K562 (cell line): ENCODE measurements at regions of chr14 and their contacts with region 1.

Region 1: GRCh38 chr14:61694830-61695694 is at the start of gene HIF1A:
- DNase-seq: peak; percentile 95 to 96 (median 96)
- ATAC-seq: peak; percentile 89
- H3K4me3 ChIP-seq: peak within 1 kb of the TSS; percentile 84
- H3K27ac ChIP-seq: peak within 1 kb of the TSS; percentile 88
- H3K4me1 ChIP-seq: peaks cover 0 to 12% of the 10 kb centered on the region in 2 experiments; a peak in 3 of 5 replicates
- H3K27me3 ChIP-seq: no peaks in the 10 kb centered on the region
- CTCF ChIP-seq: no peak; a peak in 1 of 6 replicates
- EP300 ChIP-seq: no peak
- POLR2A ChIP-seq: peak; percentile 89
- RAD21 ChIP-seq: 0 out of 4 replicates have a peak, but pooled peaks of 1 of the 2 experiments have one; percentile 14
- polyA plus RNA-seq, gene HIF1A: 5.9 to 7.5 TPM

Region 2: GRCh38 chr14:61561657-61562276 is 133.3 kb before region 1 on chr14:
- CTCF ChIA-PET with region 1: no interaction called
- POLR2A ChIA-PET with region 1: no interaction called
- in situ Hi-C with region 1: no loop called
- intact Hi-C with region 1: loop called (anchors 5 kb)
- DNase-seq: peak in 1 of 4 experiments; percentile 11
- ATAC-seq: no peak
- H3K4me3 ChIP-seq: no peak overlapping the region
- H3K27ac ChIP-seq: peak overlapping the region; percentile 81; the same call in 2 of the 3 replicates
- H3K4me1 ChIP-seq: peaks cover 29 to 54% of the 10 kb centered on the region in 2 experiments
- H3K27me3 ChIP-seq: no peaks in the 10 kb centered on the region
- CTCF ChIP-seq: no peak
- EP300 ChIP-seq: no peak
- POLR2A ChIP-seq: no peak
- RAD21 ChIP-seq: no peak

Region 3: DNA sequence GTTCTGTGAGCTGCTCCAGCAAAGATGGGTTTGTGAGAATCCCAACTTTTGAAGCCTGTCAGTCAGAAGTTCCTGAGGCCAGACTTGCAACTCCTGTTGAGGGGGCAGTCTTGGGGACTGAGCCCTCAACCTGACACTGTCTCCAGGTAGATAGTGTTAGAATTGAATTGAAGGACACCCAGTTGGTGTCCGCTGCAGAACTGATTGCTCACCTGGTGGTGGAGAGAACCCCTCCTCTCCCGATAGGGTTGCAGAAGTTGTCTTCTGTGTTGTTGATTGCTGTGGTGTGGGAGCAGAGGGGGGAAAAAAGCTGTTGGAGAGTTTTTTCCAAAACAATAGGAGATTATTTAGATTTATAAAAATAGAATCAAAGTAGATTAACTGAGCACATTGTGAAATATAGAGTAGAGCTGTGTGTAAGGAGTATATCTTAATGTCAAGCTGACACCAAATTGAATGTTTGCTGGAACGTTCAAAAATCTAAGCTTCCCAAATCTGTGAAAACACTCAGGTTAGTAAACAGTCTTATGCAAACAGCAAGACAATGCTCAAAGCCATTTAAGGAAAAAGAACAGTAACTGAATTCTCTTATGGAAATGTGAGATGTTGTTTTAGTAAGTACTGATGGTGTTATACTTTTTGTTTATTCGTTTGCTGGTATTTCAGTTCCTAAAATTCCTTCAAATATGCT is 18.8 kb after region 1 on chr14:
- CTCF ChIA-PET with region 1: no interaction called
- POLR2A ChIA-PET with region 1: interaction called, 11 read pairs
- in situ Hi-C with region 1: no loop called
- intact Hi-C with region 1: no loop called
- DNase-seq: no peak
- ATAC-seq: no peak
- H3K4me3 ChIP-seq: no peak overlapping the region
- H3K27ac ChIP-seq: no peak overlapping the region
- H3K4me1 ChIP-seq: no peaks in the 10 kb centered on the region; a peak in 3 of 5 replicates
- H3K27me3 ChIP-seq: no peaks in the 10 kb centered on the region
- CTCF ChIP-seq: no peak
- EP300 ChIP-seq: no peak
- POLR2A ChIP-seq: no peak
- RAD21 ChIP-seq: no peak